Brain microvascular endothelial cell (primary cell): ENCODE measurements at regions of chrX and their contacts with region 1.

Region 1: DNA sequence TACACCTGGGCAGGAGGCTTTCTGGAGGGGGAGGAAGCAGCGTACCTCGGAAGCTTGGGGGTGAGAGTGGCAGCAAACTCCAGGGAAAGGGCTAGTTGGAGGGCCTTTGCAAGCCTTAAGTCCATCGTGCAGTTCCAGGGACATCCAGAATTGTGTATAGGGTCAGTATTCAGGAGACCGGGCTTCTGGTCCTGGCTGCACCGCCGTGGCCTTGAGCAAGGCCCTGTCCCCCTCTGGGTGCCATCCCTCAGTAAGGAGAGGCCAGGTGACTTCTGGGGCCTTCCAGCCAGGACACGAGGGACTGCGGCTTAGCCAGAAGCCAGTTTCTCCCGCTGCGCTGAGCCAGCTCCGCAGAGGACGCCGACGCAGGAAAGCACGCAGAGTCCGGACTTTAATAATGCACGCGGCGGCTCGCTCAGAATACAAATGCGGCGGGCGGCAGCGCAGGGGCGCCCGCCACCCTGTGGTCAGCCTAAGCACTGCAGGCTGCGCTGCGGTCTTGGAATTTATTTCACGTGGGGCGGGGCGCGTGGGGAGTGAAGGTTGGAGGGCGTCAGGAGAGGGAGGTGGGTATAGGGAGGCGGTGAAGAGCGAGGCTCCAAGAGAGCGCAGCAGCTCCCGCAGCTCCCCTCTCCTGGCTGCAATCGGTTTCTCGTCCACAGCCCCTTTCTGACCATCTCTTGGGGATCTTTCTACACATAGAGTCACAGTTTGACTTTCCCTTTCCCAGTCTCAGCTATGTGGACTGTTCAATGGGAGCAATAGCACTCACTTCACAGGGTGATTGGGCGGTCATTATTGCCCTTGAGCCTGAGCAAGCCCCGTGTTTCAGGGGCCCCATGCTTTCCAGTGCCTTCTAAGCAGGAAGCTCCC is 94.1 kb upstream of the GPR50 start:
- DNase-seq: peak; percentile 47
- H3K4me3 ChIP-seq: peak overlapping the region; percentile 15
- H3K27ac ChIP-seq: no peak overlapping the region
- H3K27me3 ChIP-seq: no peaks in the 10 kb centered on the region
- CTCF ChIP-seq: peak; percentile 88

Region 2: DNA sequence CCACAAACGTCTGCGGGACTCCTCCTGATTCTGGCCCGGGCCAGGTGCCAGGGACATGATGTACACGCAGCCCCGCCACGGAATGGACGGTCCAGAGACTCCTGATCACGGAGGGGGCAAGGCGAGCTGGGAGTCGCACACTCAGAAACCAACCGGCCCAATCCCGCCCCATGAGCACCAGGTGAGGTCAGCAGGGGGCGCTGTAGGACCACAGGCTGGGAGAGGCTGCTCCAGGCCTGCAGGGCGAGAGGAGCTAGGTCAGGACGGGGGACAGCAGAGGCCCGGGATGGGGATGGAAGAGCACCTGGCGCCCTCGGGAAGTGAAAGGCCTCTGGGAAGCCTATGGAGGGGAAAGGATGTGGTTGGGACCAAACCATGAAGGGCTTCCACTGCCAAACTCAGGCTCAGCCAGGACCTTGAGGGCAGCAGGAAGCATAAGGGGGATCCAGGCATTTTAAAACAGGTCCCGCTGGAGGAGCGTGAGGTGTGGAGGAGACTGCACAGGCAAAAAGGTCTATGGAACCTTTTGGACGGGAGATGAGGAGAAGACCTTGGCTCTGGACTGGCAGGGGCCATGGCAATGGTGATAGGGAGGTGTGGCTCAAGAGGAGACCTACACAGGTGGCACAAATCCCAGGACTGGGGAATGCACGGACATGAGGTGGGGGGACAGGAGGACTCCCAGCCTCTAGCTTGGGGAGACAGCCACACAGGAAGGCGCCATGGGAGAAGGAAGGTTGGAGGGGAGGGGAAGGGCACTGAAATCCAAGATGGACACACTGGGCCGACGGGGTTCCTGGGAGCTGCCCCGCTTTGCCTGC is 310.0 kb before region 1 on chrX:
- in situ Hi-C with region 1: loop called (anchors 10 kb)
- DNase-seq: peak; percentile 43
- H3K4me3 ChIP-seq: no peak overlapping the region
- H3K27ac ChIP-seq: no peak overlapping the region
- H3K27me3 ChIP-seq: no peaks in the 10 kb centered on the region
- CTCF ChIP-seq: peak; percentile 85

Region 3: DNA sequence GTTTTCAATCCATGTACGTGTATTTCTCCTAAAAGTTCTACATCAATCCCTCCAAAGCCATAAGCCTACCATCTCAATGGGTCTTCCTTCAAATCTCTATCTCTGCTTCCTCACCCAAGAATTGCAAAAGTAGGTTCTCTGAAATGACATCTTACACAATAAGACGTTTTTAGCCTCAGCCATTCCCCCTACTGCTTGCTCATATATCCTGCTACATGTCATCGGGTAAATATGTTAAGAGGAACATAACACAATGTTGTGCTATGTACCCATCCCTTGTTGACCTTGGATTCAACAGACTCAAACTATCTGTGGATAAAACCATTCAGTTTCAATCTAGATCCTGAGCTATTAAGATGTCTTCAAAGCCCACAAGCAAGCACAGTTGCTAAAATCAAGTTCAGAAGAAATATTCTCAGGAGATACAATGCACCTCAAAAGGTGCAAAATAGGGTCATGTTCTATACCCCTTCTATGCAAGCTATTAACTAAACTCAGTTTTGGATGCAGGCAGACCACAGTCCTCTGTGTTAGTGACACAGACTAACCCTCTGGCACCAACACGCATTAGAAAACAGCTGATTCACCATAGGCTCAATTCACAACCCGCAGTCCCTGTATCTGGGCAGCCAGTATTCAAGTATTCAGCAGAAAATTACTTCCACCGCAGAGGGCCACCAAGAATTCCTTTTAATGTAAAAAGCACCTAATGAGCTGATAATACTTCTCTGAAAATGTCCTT is 240.7 kb before region 1 on chrX:
- in situ Hi-C with region 1: no loop called
- DNase-seq: peak; percentile 20
- H3K4me3 ChIP-seq: no peak overlapping the region
- H3K27ac ChIP-seq: no peak overlapping the region
- H3K27me3 ChIP-seq: no peaks in the 10 kb centered on the region
- CTCF ChIP-seq: no peak

Region 4: GRCh38 chrX:150934453-150934852 is 147.9 kb before region 1 on chrX:
- in situ Hi-C with region 1: no loop called
- DNase-seq: peak; percentile 9
- H3K4me3 ChIP-seq: no peak overlapping the region
- H3K27ac ChIP-seq: no peak overlapping the region
- H3K27me3 ChIP-seq: no peaks in the 10 kb centered on the region
- CTCF ChIP-seq: no peak

Region 5: DNA sequence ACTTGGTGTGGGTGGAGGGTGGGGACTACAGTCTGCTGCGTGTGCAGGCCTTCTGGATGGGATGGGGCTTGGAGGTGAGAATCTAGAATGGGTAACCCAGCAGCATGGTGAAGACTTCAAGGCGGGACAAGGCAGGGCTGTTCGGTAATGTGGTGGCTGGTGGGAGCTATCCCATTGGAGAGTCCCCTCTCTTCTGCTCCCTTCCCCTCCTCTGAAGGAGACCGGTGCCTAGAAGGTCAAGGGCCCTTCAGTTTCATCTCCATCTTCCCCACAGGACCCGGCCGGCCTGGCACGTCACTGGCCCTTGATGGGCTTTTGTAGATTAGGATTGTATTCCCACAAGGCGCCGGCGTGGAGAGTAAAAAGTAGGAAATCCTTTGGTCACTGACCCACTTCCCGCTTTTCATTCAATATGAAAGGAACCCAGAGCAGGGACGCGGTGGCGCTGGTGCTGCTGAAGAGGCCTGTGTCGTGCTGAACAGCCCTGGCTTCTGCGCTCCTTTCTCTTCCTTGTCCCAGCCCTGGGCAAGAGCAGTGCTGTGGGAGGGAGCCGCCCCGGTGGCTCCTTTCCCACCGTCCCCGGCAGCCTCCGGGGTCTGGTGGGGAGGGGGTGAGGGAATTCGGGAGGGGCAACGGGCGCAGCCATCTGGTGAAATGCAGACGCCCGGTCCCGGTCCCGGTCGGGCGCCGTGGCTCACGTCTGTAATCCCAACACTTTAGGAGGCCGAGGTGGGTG is 106.5 kb before region 1 on chrX:
- in situ Hi-C with region 1: no loop called
- DNase-seq: no peak
- H3K4me3 ChIP-seq: no peak overlapping the region
- H3K27ac ChIP-seq: no peak overlapping the region
- H3K27me3 ChIP-seq: no peaks in the 10 kb centered on the region
- CTCF ChIP-seq: no peak